ENCODE measurements at regions of chr18 and their contacts with region 1.

Region 1: GRCh38 chr18:59308248-59308937 is 10.1 kb downstream of the CPLX4 start:
- DNase-seq: peak; percentile 23 to 84 (median 57)
- ATAC-seq: peak; percentile 89
- H3K4me3 ChIP-seq: peak overlapping the region; percentile 56
- H3K4me3 Mint-ChIP-seq: peak overlapping the region in 9 of 10 donors; percentile 23 to 76 (median 61)
- H3K27ac ChIP-seq: no peak overlapping the region
- H3K27ac Mint-ChIP-seq: peak overlapping the region in 1 of 9 donors; percentile 44
- H3K4me1 ChIP-seq: peaks cover 0 to 4% of the 10 kb centered on the region in 2 donors
- H3K4me1 Mint-ChIP-seq: peaks cover 0 to 3% (median 0%) of the 10 kb centered on the region in 7 donors
- H3K27me3 ChIP-seq: peaks cover 0 to 10% of the 10 kb centered on the region in 2 donors
- H3K27me3 Mint-ChIP-seq: peaks cover 30 to 65% (median 52%) of the 10 kb centered on the region in 5 donors

Region 2: GRCh38 chr18:59249205-59249774 is 59.1 kb before region 1 on chr18:
- CTCF ChIA-PET with region 1: interaction called, 3 read pairs
- POLR2A ChIA-PET with region 1: no interaction called
- intact Hi-C with region 1: loop called in 1 of 2 experiments (anchors 2 kb)
- DNase-seq: peak in 3 of 9 donors; percentile 9 to 17 (median 16)
- ATAC-seq: no peak
- H3K4me3 ChIP-seq: no peak overlapping the region
- H3K4me3 Mint-ChIP-seq: no peak overlapping the region
- H3K27ac ChIP-seq: no peak overlapping the region
- H3K27ac Mint-ChIP-seq: no peak overlapping the region
- H3K4me1 ChIP-seq: no peaks in the 10 kb centered on the region
- H3K4me1 Mint-ChIP-seq: peaks cover 0 to 2% (median 0%) of the 10 kb centered on the region in 7 donors
- H3K27me3 ChIP-seq: no peaks in the 10 kb centered on the region
- H3K27me3 Mint-ChIP-seq: peaks cover 49 to 67% (median 63%) of the 10 kb centered on the region in 5 donors

Region 3: GRCh38 chr18:59358712-59359575 is 50.6 kb after region 1 on chr18 and contains the start of gene LMAN1:
- CTCF ChIA-PET with region 1: no interaction called
- POLR2A ChIA-PET with region 1: no interaction called
- intact Hi-C with region 1: loop called (anchors 1 to 2 kb)
- DNase-seq: peak; percentile 73 to 98 (median 83)
- ATAC-seq: peak; percentile 97
- H3K4me3 ChIP-seq: peak within 1 kb of the TSS; percentile 81
- H3K4me3 Mint-ChIP-seq: peak within 1 kb of the TSS; percentile 88 to 99 (median 96)
- H3K27ac ChIP-seq: peak within 1 kb of the TSS; percentile 86
- H3K27ac Mint-ChIP-seq: peak within 1 kb of the TSS; percentile 90 to 98 (median 93)
- H3K4me1 ChIP-seq: peaks cover 3 to 20% of the 10 kb centered on the region in 2 donors
- H3K4me1 Mint-ChIP-seq: peaks cover 11 to 45% (median 39%) of the 10 kb centered on the region in 7 donors
- H3K27me3 ChIP-seq: no peaks in the 10 kb centered on the region
- H3K27me3 Mint-ChIP-seq: peaks cover 0 to 9% (median 0%) of the 10 kb centered on the region in 5 donors
- total RNA-seq, gene LMAN1: 34.6 to 120 (median 46.3) TPM

Measured in naive thymus-derived CD4-positive, alpha-beta T cell (primary cell).